ENCODE measurements at regions of chr15 and their contacts with region 1.

Region 1: DNA sequence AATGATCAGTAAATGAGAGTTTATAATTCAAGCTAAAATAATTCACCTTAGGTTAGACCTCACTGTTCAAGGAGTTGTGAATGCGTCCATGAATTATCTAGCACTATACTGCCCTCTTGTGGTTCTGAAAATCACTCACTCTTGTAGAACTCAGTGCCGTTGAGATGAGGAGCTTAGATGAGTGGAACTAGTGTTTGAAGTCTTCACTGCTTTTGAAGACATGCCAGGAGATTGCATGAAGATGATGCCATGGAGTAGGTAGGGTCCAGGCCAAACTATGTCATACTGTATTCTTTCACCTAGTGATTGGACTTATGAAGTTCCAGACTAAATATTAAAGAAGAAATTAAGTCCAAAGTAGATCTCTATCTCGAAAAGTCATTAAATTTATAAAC is 28.8 kb downstream of the LYSMD4 start:
- DNase-seq: peak; percentile 56
- CTCF ChIP-seq: peak; percentile 60

Region 2: DNA sequence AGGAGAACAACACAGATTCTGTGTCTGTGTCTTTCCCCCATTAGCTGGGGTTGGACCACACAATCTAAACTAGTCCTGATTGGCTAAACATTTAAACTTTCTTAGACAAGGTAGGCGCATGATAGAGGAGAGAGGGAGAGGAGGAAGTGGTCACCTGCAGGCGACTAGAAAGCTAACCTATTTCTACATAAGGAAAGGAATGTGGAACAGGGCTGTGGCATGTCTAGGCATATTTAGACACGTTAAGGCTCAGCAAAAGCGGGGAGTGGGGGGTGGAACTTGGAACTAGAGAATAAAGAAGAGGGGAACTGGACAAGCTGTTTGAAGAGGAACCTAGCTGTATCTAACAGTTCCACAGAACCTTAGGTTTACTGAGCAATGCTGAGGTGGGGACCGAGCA is 440.3 kb before region 1 on chr15:
- CTCF ChIA-PET with region 1: interaction called, 154 read pairs
- POLR2A ChIA-PET with region 1: no interaction called
- DNase-seq: no peak
- CTCF ChIP-seq: no peak

Region 3: DNA sequence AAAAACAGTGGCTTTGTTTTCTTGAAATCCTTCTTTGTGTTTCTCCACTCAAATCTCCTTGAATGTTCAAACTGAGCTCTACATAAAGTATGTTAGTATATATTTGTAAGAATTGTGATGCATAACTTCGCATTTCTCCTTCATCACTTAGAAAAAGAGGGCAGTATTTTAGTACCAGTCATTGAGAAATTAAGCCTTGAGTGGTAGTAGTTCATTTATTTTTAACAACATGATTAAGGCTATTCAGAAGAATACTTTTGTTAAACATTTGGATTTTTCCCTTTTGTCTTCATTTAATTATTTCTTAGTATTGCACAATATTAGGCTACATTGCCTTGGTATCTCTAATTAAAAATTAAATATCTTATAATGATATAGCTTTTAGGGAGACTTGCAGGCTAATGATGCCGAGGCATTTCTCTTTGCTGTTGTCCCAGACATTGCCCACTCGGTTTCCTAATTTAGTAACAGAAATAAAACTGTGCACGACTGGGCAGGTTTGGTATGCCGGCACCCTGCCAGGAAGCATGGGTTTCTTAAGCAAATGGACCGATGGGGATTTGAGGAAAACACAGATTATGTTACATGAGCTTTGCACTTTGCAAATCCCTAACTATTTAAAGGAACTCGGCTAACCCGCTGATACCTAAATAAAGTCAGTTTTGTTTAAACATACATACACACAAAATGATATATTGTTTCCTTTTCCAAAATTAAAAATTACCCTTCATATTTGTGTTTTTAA is 398.5 kb before region 1 on chr15:
- CTCF ChIA-PET with region 1: interaction called, 11 read pairs
- POLR2A ChIA-PET with region 1: no interaction called
- DNase-seq: no peak
- CTCF ChIP-seq: no peak

Region 4: DNA sequence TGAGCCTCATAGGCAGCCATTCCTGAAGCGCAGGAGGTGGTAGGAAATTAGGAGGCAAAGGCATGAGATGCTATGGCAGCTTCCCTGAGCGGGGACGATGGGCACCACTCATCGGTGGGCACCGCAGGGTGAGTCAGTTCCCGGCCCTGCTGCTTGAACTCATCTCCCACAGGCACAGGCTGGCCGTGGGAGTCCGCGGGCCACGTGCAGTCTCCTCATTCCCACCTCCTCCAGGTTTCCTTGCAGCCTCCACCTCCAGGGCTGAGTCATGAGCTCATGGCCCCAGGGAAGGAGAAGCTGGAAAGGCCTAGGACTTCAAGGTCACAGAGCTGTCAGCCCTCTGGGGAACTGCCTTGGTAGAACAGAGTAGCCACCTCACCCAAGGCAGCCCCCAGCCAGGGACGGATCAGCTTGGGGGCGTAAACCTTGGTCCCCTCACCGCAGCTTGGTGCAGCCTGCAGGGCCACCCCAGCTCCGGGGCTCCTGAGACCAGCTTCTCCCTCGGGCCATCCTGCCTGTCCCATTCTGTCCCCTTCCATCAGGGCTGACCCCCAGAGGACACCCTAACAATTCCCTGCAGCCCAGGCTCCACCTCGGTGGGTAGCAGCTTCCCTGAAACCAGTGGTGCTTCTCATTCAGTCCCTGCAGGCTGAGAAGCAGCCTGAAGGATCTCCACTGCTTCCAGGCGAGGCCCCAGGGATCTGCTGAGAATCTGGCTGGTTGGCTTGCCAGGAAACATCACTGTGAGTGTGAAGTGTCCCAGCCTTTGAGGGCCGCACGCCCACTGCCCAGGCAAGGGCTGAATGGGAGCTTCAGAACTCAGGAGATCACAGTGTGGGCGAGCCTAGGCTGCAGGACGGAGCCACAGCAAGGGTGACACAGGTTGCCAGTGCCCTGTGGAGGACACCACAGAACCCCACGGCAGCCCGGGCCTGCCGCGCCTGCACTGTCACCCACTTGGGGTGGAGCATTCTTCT is 289.4 kb before region 1 on chr15:
- CTCF ChIA-PET with region 1: interaction called, 14 read pairs
- POLR2A ChIA-PET with region 1: no interaction called
- DNase-seq: peak; percentile 13
- CTCF ChIP-seq: no peak

Region 5: DNA sequence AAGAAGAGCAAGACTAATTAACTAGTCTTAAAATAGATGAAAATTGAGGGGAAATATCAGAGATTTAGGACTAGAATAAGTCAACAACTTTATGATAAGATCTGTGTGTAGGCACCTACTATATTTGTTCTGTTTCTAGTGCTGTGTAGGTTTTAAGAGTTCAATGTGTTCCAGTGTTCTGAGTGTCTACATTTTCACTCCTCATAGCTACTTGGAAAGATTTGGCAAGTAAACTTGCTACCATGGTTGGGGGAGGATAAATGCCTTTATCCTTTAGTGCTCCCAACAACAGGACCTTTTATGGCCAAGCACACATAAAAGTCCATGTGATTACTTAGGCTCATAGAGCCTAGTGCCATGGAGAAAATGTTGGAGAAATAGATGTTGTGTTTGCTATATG is 35.2 kb before region 1 on chr15:
- CTCF ChIA-PET with region 1: interaction called, 12 read pairs
- POLR2A ChIA-PET with region 1: no interaction called
- DNase-seq: no peak
- CTCF ChIP-seq: no peak

Region 6: DNA sequence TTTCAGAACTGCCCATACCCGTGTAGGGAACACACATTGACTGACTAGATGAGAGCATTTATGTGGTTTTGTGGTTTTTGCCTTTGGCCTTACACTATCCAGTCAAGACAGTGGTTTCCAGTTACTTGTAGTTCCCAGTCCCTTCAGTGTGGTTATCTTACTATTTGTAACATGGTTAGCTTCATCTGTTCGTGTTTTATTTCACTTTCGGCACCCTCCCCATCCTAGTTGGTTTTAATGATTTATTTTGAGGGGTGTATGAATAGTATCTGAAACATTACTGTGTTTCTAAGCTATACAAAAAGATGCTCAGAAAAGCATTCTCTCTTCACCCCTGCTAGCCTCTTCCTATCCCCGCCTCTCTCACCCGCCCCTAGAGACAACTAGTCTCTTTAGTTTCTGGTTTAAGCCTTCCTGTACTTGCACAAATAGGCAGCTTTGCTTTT is 14.7 kb after region 1 on chr15:
- CTCF ChIA-PET with region 1: interaction called, 123 read pairs
- POLR2A ChIA-PET with region 1: interaction called, 3 read pairs
- DNase-seq: peak; percentile 59
- CTCF ChIP-seq: no peak

Region 7: GRCh38 chr15:100020189-100020588 is 315.7 kb after region 1 on chr15:
- CTCF ChIA-PET with region 1: no interaction called
- POLR2A ChIA-PET with region 1: no interaction called
- DNase-seq: no peak
- CTCF ChIP-seq: no peak